Naive thymus-derived CD8-positive, alpha-beta T cell (primary cell): ENCODE measurements at regions of chr1 and their contacts with region 1.

Region 1: GRCh38 chr1:25616095-25616986 is at the start of gene MAN1C1:
- DNase-seq: peak; percentile 70 to 90 (median 83)
- ATAC-seq: peak; percentile 62 to 65
- H3K4me3 Mint-ChIP-seq: peak within 1 kb of the TSS; percentile 69 to 99 (median 84)
- H3K27ac Mint-ChIP-seq: peak within 1 kb of the TSS; percentile 42 to 91 (median 82)
- H3K4me1 Mint-ChIP-seq: peaks cover 39 to 54% (median 51%) of the 10 kb centered on the region in 4 donors
- H3K27me3 Mint-ChIP-seq: peaks cover 0 to 5% (median 0%) of the 10 kb centered on the region in 5 donors
- polyA plus RNA-seq, gene MAN1C1: 11.3 to 48.3 (median 11.7) TPM

Region 2: DNA sequence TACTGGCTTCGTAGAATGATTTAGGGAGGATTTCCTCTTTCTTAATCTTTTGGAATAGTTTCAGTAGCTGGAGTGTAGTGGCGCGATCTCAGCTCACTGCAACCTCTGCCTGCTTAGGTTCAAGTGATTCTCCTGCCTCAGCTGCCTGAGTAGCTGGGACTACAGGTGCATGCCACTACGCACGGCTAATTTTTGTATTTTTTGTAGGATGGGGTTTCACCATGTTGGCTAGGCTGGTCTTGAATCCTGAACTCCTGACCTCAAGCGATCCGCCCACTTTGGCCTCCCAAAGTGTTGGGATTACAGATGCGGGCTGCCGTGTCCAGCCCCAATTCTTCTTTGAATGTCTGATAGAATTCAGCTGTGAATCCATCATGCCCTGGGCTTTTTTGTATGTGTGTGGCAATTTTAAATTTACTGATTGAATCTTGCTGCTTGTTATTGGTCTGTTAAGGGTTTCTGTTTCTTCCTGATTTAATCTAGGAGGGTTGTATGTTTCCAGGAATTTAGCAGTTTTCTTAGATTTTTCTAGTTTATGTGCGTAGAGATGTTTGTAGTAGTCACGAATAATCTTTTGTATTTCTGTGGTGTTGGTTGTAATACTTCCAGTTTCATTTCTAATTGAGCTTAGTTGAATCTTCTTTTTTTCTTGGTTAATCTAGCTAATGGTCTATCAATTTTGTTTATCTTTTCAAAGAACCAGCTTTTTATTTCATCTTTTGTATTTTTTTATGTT is 15.6 kb after region 1 on chr1:
- POLR2A ChIA-PET with region 1: interaction called, 12 read pairs
- DNase-seq: peak in 2 of 10 donors; percentile 13 to 37
- ATAC-seq: peak; percentile 33 to 49
- H3K4me3 Mint-ChIP-seq: peak overlapping the region; percentile 79 to 94 (median 90)
- H3K27ac Mint-ChIP-seq: peak overlapping the region; percentile 93 to 98 (median 96)
- H3K4me1 Mint-ChIP-seq: peaks cover 36 to 80% (median 69%) of the 10 kb centered on the region in 4 donors
- H3K27me3 Mint-ChIP-seq: peaks cover 0 to 9% (median 0%) of the 10 kb centered on the region in 5 donors

Region 3: GRCh38 chr1:25642574-25643108 is 26.3 kb after region 1 on chr1:
- POLR2A ChIA-PET with region 1: interaction called, 91 read pairs
- DNase-seq: peak; percentile 42 to 91 (median 78)
- ATAC-seq: peak; percentile 90 to 95
- H3K4me3 Mint-ChIP-seq: peak overlapping the region; percentile 54 to 86 (median 74)
- H3K27ac Mint-ChIP-seq: peak overlapping the region; percentile 72 to 97 (median 92)
- H3K4me1 Mint-ChIP-seq: peaks cover 27 to 88% (median 73%) of the 10 kb centered on the region in 4 donors
- H3K27me3 Mint-ChIP-seq: peaks cover 0 to 5% (median 0%) of the 10 kb centered on the region in 5 donors

Region 4: DNA sequence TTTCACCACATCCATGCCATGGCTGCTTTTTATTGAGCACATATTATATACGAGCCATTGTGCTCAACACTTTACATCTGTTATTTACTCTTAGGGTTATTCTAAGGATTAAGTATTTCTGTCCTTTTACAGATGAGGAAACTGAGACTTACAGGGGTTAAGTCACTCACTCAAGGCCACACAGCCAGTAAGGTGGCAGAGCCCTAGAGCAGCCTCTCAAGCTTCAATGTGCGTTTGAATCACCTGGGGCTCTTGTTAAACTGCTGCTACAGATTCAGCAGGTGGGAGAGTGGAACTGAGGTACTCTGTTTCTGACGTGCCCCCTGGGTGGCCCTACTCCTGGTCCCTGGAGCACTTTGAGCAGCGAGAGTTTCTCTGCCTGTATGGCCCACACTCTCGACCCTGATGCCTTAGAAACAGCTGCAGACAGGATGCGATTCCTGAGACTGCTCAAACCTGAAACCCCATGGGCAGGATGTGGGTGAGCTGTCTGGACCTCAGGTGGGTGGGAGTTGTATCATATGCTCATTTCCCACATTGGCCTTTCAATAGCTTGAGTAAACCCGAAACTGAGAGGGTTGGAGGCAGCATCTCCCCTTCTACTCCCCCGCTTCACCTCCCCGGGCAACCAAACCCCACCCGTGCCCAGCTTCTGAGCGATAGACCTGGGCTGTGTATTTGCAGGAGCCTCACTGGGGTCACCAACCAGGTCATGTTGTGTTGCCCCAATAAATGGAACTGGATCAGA is 59.6 kb after region 1 on chr1:
- POLR2A ChIA-PET with region 1: interaction called, 66 read pairs
- DNase-seq: peak; percentile 40 to 91 (median 80)
- ATAC-seq: peak; percentile 78 to 90
- H3K4me3 Mint-ChIP-seq: peak overlapping the region; percentile 58 to 91 (median 80)
- H3K27ac Mint-ChIP-seq: peak overlapping the region; percentile 90 to 98 (median 96)
- H3K4me1 Mint-ChIP-seq: peaks cover 59 to 91% (median 89%) of the 10 kb centered on the region in 4 donors
- H3K27me3 Mint-ChIP-seq: no peaks in the 10 kb centered on the region

Region 5: GRCh38 chr1:25697435-25698233 is 81.3 kb after region 1 on chr1:
- POLR2A ChIA-PET with region 1: interaction called, 10 read pairs
- DNase-seq: peak in 9 of 10 donors; percentile 15 to 72 (median 44)
- ATAC-seq: peak; percentile 97 to 98
- H3K4me3 Mint-ChIP-seq: peak overlapping the region in 8 of 10 donors; percentile 4 to 61 (median 29)
- H3K27ac Mint-ChIP-seq: peak overlapping the region; percentile 3 to 87 (median 74)
- H3K4me1 Mint-ChIP-seq: peaks cover 19 to 70% (median 37%) of the 10 kb centered on the region in 4 donors
- H3K27me3 Mint-ChIP-seq: no peaks in the 10 kb centered on the region

Region 6: GRCh38 chr1:25771246-25772114 is 155.1 kb after region 1 on chr1:
- POLR2A ChIA-PET with region 1: interaction called, 25 read pairs
- DNase-seq: peak in 9 of 10 donors; percentile 27 to 76 (median 54)
- ATAC-seq: peak; percentile 11 to 12
- H3K4me3 Mint-ChIP-seq: peak overlapping the region; percentile 41 to 88 (median 78)
- H3K27ac Mint-ChIP-seq: peak overlapping the region; percentile 85 to 99 (median 98)
- H3K4me1 Mint-ChIP-seq: peaks cover 59 to 100% (median 83%) of the 10 kb centered on the region in 4 donors
- H3K27me3 Mint-ChIP-seq: peaks cover 0 to 3% (median 0%) of the 10 kb centered on the region in 5 donors